AG04449 (cell line): ENCODE measurements at regions of chr1 and their contacts with region 1.

Region 1: DNA sequence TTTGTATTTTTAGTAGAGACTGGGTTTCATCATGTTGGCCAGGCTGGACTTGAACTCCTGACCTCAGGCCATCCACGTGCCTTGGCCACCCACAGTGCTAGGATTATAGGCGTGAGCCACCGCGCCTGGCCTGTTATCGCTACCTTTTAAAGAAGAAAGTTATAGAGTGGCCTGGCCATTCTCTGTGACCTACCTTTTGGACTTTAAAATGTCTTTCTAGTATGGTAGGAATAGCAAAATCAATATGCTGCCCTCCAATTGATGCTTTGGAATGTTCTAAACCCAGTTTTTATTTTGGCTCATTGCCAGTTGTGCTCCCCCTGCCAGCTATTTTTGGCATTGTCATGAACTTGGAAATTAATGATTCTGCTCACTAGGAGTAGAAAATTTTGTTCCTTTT is 19.9 kb downstream of the HIPK1 start:
- DNase-seq: no peak
- H3K4me3 ChIP-seq: no peak overlapping the region
- CTCF ChIP-seq: no peak

Region 2: GRCh38 chr1:113669984-113670383 is 279.0 kb before region 1 on chr1:
- CTCF ChIA-PET with region 1: no interaction called
- POLR2A ChIA-PET with region 1: no interaction called
- DNase-seq: no peak
- H3K4me3 ChIP-seq: no peak overlapping the region
- CTCF ChIP-seq: no peak

Region 3: DNA sequence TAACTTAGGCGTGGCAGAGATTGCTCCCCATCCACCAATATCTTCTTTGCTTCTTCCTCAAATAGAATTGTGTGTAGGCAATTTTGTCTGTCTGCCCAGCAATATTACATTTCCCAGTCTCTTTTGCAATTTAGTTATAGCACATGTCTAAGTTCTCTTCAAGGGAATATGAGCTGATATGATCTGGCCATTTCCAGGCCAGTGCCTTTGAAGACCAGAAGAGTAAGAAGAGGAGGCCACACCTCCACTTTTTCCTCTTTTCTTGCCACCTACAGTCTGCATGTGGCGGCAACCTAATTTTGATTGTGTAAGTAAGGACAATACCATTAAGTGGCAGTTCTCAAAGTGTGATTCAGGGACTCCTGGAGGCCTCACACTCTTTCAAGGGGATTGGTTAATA is 130.4 kb before region 1 on chr1:
- CTCF ChIA-PET with region 1: no interaction called
- POLR2A ChIA-PET with region 1: no interaction called
- DNase-seq: no peak
- H3K4me3 ChIP-seq: no peak overlapping the region
- CTCF ChIP-seq: no peak

Region 4: GRCh38 chr1:113963281-113963906 is 14.4 kb after region 1 on chr1:
- CTCF ChIA-PET with region 1: interaction called, 21 read pairs
- POLR2A ChIA-PET with region 1: interaction called, 3 read pairs
- DNase-seq: no peak
- H3K4me3 ChIP-seq: no peak overlapping the region
- CTCF ChIP-seq: no peak